ENCODE measurements at regions of chr12 and their contacts with region 1.

Region 1: DNA sequence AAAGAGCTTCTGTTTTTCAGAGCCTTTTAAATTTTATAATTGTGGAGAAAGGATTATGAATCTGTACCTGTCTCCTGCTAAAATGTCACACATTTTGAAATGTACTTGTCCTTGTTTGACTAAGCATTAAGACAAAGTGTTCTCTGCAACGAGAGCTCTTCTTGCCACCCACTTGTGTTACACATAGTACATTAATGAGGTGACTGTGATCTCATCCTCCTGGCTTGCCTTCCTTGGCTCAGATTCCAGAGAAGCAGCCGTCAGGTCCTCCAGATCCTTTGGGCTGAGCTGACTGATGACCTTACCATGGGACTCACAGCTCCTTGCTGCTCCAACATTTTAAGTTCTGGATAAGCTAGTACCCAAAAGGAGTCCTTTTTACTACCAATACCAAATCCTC is 81.4 kb downstream of the BBS10 start:
- DNase-seq: peak in 1 of 2 donors; percentile 36
- ATAC-seq: peak in 7 of 8 donors; percentile 73 to 99 (median 90)
- H3K4me3 ChIP-seq: no peak overlapping the region
- H3K27ac ChIP-seq: peak overlapping the region in 1 of 10 donors; percentile 38
- H3K4me1 ChIP-seq: peaks cover 0 to 13% (median 5%) of the 10 kb centered on the region in 9 donors
- H3K27me3 ChIP-seq: peaks cover 0 to 4% (median 0%) of the 10 kb centered on the region in 7 donors
- CTCF ChIP-seq: no peak

Region 2: DNA sequence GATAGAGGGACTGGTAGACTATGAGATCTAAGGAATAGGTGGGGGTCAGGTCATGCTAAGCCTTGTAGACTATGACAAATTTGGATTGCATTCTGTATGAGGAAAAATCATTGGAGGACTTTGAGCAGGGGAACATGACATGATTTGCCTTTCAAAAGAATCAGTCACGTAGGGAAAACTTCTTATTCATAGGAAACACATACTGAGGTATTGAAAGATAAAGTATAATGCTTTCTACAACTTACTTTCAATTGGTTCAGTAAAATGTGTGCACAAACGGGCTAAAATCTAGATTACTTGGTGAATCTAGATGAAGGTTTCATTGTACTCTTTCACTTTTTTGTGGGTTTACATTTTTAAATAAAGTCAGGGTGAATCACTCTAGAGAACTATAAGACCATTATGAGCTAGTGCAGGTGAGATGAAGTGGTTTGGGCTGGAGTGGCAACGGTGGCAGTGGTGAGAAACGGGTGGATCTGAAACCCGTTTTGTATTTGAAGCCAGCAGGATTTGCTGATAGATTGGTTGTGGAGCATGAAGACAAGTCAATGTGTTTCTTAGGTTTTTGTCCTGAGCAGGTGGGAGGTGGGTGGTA is 74.7 kb after region 1 on chr12:
- intact Hi-C with region 1: loop called in 2 of 10 experiments (anchors 5 to 10 kb)
- DNase-seq: no peak
- ATAC-seq: no peak
- H3K4me3 ChIP-seq: no peak overlapping the region
- H3K27ac ChIP-seq: no peak overlapping the region
- H3K4me1 ChIP-seq: peaks cover 0 to 35% (median 18%) of the 10 kb centered on the region in 9 donors
- H3K27me3 ChIP-seq: no peaks in the 10 kb centered on the region
- CTCF ChIP-seq: no peak

Region 3: GRCh38 chr12:76623931-76624330 is 357.1 kb after region 1 on chr12:
- intact Hi-C with region 1: no loop called
- DNase-seq: no peak
- ATAC-seq: no peak
- H3K4me3 ChIP-seq: no peak overlapping the region
- H3K27ac ChIP-seq: no peak overlapping the region
- H3K4me1 ChIP-seq: peaks cover 0 to 10% (median 3%) of the 10 kb centered on the region in 9 donors
- H3K27me3 ChIP-seq: no peaks in the 10 kb centered on the region
- CTCF ChIP-seq: no peak